Keratinocyte (primary cell): ENCODE measurements at regions of chr18 and their contacts with region 1.

Region 1: DNA sequence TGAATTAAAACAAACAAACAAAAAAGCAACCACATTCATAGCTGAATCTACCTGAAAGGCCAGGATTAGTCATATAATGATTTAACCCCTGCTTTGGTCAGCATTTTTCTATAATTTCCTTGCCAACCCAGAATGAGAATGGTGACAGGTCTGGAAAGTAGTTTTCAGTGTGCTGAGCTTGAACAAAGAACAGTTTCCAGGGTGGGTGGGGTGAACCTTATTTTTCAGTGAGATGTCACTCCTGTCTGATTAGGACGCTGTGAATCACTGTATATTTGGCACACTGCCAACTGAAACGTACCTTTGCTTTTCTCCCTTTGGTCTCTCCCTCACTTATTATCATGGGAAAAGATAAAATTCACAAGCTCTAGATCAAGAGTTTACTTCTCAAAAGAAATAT is 35.0 kb upstream of the DSC1 start:
- DNase-seq: no peak
- H3K4me3 ChIP-seq: no peak overlapping the region
- H3K27ac ChIP-seq: peak overlapping the region; percentile 75
- H3K4me1 ChIP-seq: peaks cover 35% of the 10 kb centered on the region
- H3K27me3 ChIP-seq: no peaks in the 10 kb centered on the region
- CTCF ChIP-seq: no peak

Region 2: DNA sequence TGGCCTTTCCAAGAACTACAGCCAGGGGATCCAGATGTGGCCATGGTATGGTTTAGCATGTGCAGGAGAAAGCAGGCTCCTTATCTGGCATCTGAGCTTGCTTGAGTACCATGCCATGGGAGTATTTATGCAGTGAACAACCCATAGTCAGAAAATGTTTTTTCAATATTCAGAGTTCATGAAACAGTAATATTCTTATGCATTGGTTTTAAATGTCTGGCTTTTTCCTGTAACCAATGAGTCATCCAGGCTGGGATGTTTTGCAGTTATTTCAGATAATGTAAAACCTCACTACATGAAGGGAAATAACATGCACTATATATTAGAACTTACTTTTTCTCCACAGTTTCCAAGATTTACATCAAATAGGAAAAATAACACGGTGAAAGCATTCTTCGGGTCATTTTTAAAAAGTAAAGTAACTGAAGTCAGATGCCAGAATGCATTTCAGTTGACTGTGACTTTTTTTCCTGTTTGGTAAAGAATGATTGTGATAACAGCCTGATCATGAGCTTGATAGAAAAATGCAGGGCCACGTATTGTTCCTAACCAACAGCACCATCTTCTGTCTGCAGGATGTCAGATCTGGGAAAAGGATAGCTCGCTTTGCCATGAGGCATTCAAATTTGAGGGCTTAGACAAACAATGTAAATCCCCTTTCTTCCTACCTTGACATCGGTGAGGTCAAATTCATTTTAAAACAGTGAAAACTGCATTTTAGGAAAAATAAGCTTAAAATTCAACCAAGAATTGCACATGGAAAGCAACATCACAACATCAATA is 308.0 kb before region 1 on chr18:
- dilution Hi-C with region 1: no loop called
- DNase-seq: no peak
- H3K4me3 ChIP-seq: no peak overlapping the region
- H3K27ac ChIP-seq: no peak overlapping the region
- H3K4me1 ChIP-seq: no peaks in the 10 kb centered on the region
- H3K27me3 ChIP-seq: no peaks in the 10 kb centered on the region
- CTCF ChIP-seq: peak; percentile 40 to 65 (median 47)

Region 3: GRCh38 chr18:31099450-31100230 is 98.0 kb before region 1 on chr18:
- dilution Hi-C with region 1: loop called (anchors 25 kb)
- DNase-seq: no peak
- H3K4me3 ChIP-seq: peak overlapping the region; percentile 69 to 89 (median 89)
- H3K27ac ChIP-seq: peak overlapping the region; percentile 90
- H3K4me1 ChIP-seq: peaks cover 31% of the 10 kb centered on the region
- H3K27me3 ChIP-seq: no peaks in the 10 kb centered on the region
- CTCF ChIP-seq: no peak